Testis (tissue), 5 donors: ENCODE measurements at regions of chr3 and their contacts with region 1.

Region 1: DNA sequence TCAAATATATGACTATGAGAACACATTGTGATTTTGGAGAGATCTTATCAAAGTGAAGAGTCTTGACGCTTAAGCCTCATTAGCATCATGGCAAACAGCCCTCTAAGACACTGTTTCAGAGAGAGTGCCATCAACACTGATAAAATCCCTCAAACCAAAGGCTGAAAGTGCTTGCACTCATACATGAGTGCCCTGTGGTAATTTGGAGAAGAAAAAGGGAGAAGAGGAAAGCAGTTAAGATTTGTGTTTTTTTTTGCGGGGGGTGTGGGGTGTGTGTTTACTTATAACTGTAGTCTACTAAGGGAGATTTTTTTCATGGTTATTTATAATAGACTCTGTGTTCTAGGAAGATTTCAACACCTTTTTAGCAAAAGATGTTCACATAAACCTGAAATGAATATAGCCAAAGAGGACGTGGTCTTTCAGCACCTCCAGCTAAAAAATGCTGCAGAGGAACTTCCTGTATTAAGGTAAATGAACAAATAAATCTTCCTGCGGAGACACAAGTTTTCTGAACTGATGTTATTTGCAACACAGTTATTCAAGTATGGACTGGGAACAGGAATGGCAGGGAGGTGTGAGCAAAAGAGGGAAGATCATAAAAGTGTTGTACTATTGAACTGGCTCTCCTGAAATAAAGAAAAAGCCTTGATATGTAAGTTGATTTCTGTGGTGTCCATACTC is 81.9 kb upstream of the TGFBR2 start:
- DNase-seq: no peak
- H3K4me3 ChIP-seq: no peak overlapping the region
- H3K27ac ChIP-seq: peak overlapping the region; percentile 2 to 6
- H3K4me1 ChIP-seq: peaks cover 17% of the 10 kb centered on the region
- H3K27me3 ChIP-seq: no peaks in the 10 kb centered on the region
- CTCF ChIP-seq: no peak
- POLR2A ChIP-seq: no peak

Region 2: DNA sequence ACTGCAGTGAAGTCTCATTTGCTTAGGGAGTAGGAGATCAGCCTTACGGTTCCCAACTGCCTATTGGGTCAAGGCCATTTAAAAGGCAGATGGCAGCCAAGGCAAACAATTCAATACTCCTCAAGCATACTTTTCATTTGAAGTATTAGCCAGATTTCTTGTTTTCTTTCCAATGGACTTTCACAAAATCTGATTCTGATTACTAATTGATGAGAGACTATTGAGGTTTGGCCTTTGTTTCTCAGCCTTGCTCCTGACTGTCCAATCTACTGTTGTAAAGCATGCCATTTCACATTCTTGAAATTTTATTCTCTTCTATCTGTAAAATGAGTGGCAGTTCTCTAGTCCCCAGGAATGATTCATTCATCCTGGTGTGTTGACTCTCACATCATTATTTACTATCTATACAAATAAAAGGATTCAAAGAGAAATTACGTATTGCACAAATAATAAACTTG is 84.3 kb before region 1 on chr3:
- intact Hi-C with region 1: no loop called
- DNase-seq: peak; percentile 28
- H3K4me3 ChIP-seq: no peak overlapping the region
- H3K27ac ChIP-seq: peak overlapping the region; percentile 69 to 80
- H3K4me1 ChIP-seq: peaks cover 20% of the 10 kb centered on the region
- H3K27me3 ChIP-seq: no peaks in the 10 kb centered on the region
- CTCF ChIP-seq: no peak
- POLR2A ChIP-seq: no peak

Region 3: DNA sequence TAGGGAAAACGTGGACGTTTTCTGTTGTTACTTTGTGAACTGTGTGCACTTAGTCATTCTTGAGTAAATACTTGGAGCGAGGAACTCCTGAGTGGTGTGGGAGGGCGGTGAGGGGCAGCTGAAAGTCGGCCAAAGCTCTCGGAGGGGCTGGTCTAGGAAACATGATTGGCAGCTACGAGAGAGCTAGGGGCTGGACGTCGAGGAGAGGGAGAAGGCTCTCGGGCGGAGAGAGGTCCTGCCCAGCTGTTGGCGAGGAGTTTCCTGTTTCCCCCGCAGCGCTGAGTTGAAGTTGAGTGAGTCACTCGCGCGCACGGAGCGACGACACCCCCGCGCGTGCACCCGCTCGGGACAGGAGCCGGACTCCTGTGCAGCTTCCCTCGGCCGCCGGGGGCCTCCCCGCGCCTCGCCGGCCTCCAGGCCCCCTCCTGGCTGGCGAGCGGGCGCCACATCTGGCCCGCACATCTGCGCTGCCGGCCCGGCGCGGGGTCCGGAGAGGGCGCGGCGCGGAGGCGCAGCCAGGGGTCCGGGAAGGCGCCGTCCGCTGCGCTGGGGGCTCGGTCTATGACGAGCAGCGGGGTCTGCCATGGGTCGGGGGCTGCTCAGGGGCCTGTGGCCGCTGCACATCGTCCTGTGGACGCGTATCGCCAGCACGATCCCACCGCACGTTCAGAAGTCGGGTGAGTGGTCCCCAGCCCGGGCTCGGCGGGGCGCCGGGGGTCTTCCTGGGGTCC is 82.0 kb after region 1 on chr3 and contains the start of gene TGFBR2:
- intact Hi-C with region 1: no loop called
- DNase-seq: peak; percentile 89
- H3K4me3 ChIP-seq: peak within 1 kb of the TSS; percentile 83 to 98
- H3K27ac ChIP-seq: peak within 1 kb of the TSS; percentile 92 to 93
- H3K4me1 ChIP-seq: no peaks in the 10 kb centered on the region
- H3K27me3 ChIP-seq: no peaks in the 10 kb centered on the region
- CTCF ChIP-seq: peak in 2 of 3 experiments; percentile 17 to 20
- POLR2A ChIP-seq: no peak
- total RNA-seq, gene TGFBR2: 18.7 to 26.1 TPM

Region 4: DNA sequence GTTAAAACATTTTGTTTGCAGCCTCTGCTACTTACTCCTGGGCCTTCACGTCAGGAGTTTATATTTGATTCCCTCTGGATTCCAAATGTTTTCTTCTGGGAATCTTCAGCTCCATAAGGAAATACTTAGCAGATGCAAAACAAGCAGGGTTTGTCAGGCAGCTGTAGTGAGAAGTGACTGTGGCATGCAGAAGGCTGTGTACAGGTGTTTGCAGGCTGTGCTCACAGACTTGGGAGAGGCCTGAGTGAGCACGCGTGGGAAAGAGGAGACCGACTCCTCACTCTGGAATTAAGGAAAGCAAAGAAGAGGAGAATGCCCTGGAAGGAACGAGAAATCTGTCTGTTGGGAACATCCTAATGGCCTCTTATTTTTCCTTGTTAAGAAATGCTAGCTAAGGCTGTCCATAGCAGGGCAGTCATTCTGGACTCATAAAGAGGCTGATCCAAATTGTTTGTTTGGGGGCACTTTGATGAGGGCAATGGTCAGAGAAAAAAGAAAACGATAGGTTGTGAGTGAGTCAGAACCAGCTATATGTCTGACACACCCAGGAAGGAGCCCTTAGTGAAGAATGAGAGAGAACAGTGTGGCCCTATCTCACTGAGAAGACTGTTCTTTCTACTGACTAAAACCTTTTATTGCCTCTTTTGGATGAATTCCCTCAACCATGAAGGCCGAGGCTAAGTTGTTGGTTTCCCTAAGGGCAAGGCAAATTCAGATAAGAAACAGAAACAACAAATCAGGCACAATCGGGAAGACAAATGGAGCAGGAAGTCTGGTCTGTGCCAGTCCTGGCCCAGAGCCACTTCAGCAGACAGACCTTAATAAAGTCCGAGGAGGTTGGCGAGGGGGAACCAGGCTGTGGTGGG is 164.5 kb after region 1 on chr3:
- intact Hi-C with region 1: loop called (anchors 10 kb)
- DNase-seq: peak; percentile 32
- H3K4me3 ChIP-seq: no peak overlapping the region
- H3K27ac ChIP-seq: peak overlapping the region; percentile 21 to 82
- H3K4me1 ChIP-seq: peaks cover 22% of the 10 kb centered on the region
- H3K27me3 ChIP-seq: no peaks in the 10 kb centered on the region
- CTCF ChIP-seq: no peak
- POLR2A ChIP-seq: no peak